ENCODE measurements at regions of chr14 and their contacts with region 1.

Region 1: DNA sequence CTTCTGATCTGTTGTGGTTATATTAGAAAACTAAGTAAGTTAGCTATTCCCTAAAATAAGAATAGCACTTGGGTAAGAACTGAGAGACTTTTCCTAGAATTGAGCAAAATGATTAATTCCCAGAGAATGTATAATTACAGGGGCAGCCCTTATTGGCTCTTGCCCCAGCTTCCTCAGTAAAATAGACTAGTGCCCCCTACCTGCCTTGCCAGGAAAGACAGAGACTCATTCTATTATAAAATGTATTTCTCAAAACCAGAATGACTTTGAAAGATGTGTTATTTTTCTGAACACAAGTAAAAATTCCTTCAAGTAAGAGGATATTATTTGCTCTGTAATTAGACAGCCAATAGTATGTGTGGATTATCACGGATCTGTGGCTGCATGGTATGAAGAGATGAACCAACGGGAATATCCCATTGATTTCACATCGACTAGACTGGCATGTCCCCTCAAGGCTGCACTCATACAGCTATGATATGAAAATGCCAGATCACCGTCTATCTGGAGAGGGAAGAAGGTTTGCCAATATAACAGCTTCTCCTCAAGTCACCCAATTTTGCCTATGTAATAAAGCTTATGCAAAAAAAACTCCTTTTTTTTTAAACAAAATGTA is 7.4 kb upstream of the GLRX5 start:
- DNase-seq: peak; percentile 68
- ATAC-seq: peak; percentile 81
- H3K4me3 ChIP-seq: no peak overlapping the region
- H3K4me3 Mint-ChIP-seq: no peak overlapping the region
- H3K27ac ChIP-seq: no peak overlapping the region
- H3K27ac Mint-ChIP-seq: no peak overlapping the region
- H3K4me1 ChIP-seq: peaks cover 14 to 23% of the 10 kb centered on the region in 2 donors
- H3K4me1 Mint-ChIP-seq: peaks cover 38% of the 10 kb centered on the region
- H3K27me3 ChIP-seq: no peaks in the 10 kb centered on the region
- H3K27me3 Mint-ChIP-seq: no peaks in the 10 kb centered on the region
- CTCF ChIP-seq: peak; percentile 93

Region 2: GRCh38 chr14:95431199-95432143 is 96.0 kb before region 1 on chr14:
- CTCF ChIA-PET with region 1: interaction called, 47 read pairs
- POLR2A ChIA-PET with region 1: no interaction called
- intact Hi-C with region 1: loop called (anchors 1 kb)
- DNase-seq: peak; percentile 48
- ATAC-seq: no peak
- H3K4me3 ChIP-seq: no peak overlapping the region
- H3K4me3 Mint-ChIP-seq: no peak overlapping the region
- H3K27ac ChIP-seq: no peak overlapping the region
- H3K27ac Mint-ChIP-seq: no peak overlapping the region
- H3K4me1 ChIP-seq: peaks cover 0 to 3% of the 10 kb centered on the region in 2 donors
- H3K4me1 Mint-ChIP-seq: peaks cover 7% of the 10 kb centered on the region
- H3K27me3 ChIP-seq: no peaks in the 10 kb centered on the region
- H3K27me3 Mint-ChIP-seq: no peaks in the 10 kb centered on the region
- CTCF ChIP-seq: peak; percentile 53

Region 3: GRCh38 chr14:95452176-95452892 is 75.2 kb before region 1 on chr14:
- CTCF ChIA-PET with region 1: interaction called, 204 read pairs
- POLR2A ChIA-PET with region 1: no interaction called
- intact Hi-C with region 1: no loop called
- DNase-seq: no peak
- ATAC-seq: no peak
- H3K4me3 ChIP-seq: no peak overlapping the region
- H3K4me3 Mint-ChIP-seq: no peak overlapping the region
- H3K27ac ChIP-seq: no peak overlapping the region
- H3K27ac Mint-ChIP-seq: no peak overlapping the region
- H3K4me1 ChIP-seq: peaks cover 11 to 13% of the 10 kb centered on the region in 2 donors
- H3K4me1 Mint-ChIP-seq: peaks cover 8% of the 10 kb centered on the region
- H3K27me3 ChIP-seq: no peaks in the 10 kb centered on the region
- H3K27me3 Mint-ChIP-seq: no peaks in the 10 kb centered on the region
- CTCF ChIP-seq: no peak

Region 4: GRCh38 chr14:95483309-95484165 is 44.0 kb before region 1 on chr14:
- CTCF ChIA-PET with region 1: interaction called, 15 read pairs
- POLR2A ChIA-PET with region 1: no interaction called
- intact Hi-C with region 1: no loop called
- DNase-seq: no peak
- ATAC-seq: no peak
- H3K4me3 ChIP-seq: no peak overlapping the region
- H3K4me3 Mint-ChIP-seq: no peak overlapping the region
- H3K27ac ChIP-seq: no peak overlapping the region
- H3K27ac Mint-ChIP-seq: peak overlapping the region; percentile 59
- H3K4me1 ChIP-seq: peaks cover 64 to 87% of the 10 kb centered on the region in 2 donors
- H3K4me1 Mint-ChIP-seq: peaks cover 80% of the 10 kb centered on the region
- H3K27me3 ChIP-seq: no peaks in the 10 kb centered on the region
- H3K27me3 Mint-ChIP-seq: no peaks in the 10 kb centered on the region
- CTCF ChIP-seq: no peak

Region 5: GRCh38 chr14:95495538-95496025 is 31.9 kb before region 1 on chr14:
- CTCF ChIA-PET with region 1: interaction called, 16 read pairs
- POLR2A ChIA-PET with region 1: no interaction called
- intact Hi-C with region 1: no loop called
- DNase-seq: peak; percentile 91
- ATAC-seq: peak; percentile 92
- H3K4me3 ChIP-seq: peak overlapping the region in 3 of 5 experiments; percentile 14 to 53 (median 21)
- H3K4me3 Mint-ChIP-seq: peak overlapping the region; percentile 70
- H3K27ac ChIP-seq: peak overlapping the region; percentile 97
- H3K27ac Mint-ChIP-seq: peak overlapping the region; percentile 95
- H3K4me1 ChIP-seq: peaks cover 47 to 78% of the 10 kb centered on the region in 2 donors
- H3K4me1 Mint-ChIP-seq: peaks cover 81% of the 10 kb centered on the region
- H3K27me3 ChIP-seq: no peaks in the 10 kb centered on the region
- H3K27me3 Mint-ChIP-seq: no peaks in the 10 kb centered on the region
- CTCF ChIP-seq: no peak

Region 6: DNA sequence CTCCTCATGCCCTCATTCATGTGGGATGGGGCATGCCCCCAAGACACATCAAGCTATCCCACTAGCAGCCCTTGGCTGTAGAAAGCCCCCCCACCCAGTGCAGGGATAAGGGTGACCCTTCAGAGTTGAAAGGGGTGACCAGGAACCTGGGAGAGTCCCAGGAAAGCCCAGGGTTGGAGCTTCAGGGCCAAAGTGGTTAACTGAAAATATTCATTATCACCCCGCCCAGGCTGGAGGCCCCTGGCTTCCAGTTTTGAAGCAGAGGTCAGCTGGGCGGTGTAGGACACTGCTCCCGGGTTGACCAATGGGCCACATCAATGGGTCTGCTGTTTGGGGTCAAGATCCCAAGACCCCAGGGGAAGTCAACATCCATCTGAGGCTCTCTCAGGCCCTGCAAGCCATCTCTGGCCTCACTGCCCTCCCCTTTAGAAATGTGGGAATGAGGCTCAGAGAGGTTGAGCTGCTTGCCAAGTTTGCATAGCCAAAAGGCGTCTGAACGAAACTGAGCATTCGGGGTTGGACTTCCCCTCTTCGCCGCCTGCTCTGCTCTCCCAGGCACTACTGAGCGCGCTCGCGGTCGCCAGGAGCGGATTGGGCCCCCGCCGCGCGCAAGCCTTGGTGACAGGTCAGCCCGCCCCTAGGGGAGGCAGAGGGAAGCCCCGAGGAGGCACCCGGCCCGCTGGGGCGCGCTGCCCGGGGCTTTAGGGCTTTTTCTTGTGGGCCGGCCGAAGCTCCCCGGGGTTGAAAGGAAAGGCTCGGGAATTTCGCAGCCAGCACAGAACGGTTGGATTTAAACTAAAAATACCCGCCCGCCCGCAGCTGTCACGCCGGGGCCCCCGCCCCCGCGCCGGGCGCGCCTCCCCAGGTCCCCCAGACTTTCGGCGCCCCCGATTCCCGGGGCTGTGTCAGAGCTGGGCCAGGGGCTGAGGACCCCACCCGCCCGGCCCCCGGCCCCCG is 11.6 kb before region 1 on chr14:
- CTCF ChIA-PET with region 1: interaction called, 60 read pairs
- POLR2A ChIA-PET with region 1: interaction called, 16 read pairs
- intact Hi-C with region 1: loop called (anchors 1 kb)
- DNase-seq: peak; percentile 95
- ATAC-seq: peak; percentile 85
- H3K4me3 ChIP-seq: peak overlapping the region; percentile 50 to 77 (median 72)
- H3K4me3 Mint-ChIP-seq: peak overlapping the region; percentile 95
- H3K27ac ChIP-seq: peak overlapping the region; percentile 77 to 79
- H3K27ac Mint-ChIP-seq: peak overlapping the region; percentile 95
- H3K4me1 ChIP-seq: peaks cover 66 to 76% of the 10 kb centered on the region in 2 donors
- H3K4me1 Mint-ChIP-seq: peaks cover 77% of the 10 kb centered on the region
- H3K27me3 ChIP-seq: no peaks in the 10 kb centered on the region
- H3K27me3 Mint-ChIP-seq: no peaks in the 10 kb centered on the region
- CTCF ChIP-seq: peak; percentile 65

Region 7: DNA sequence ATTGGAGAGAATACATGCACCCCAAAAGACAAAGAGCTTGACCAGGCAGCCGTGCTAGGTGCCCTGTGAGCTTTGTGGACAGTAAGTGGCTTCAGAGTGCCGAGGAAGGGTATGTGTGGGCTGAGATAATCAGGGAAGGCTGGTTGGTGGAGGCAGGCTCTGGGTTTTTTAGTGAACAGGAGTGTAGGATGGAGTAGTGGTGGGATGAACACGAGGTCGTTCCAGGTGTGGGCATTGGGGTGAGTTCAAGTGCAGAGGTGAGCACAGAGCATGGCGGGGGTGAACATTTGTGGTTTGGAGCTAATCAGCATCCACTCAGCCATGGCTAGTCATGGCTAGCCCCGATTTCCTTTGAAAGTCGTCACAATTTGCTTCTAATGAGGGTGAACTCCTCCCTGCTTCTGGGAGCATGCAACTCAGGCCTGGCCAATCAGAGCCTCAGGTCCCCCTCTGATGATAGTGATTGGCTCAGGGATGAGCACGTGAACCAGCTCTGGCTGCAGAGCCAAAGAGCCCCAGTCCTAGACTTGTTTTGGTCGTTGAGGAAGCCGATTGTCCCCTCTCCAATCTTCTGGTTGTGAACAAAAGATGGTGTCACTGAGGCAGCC is 118.0 kb after region 1 on chr14:
- CTCF ChIA-PET with region 1: no interaction called
- POLR2A ChIA-PET with region 1: no interaction called
- intact Hi-C with region 1: no loop called
- DNase-seq: no peak
- ATAC-seq: no peak
- H3K4me3 ChIP-seq: no peak overlapping the region
- H3K4me3 Mint-ChIP-seq: no peak overlapping the region
- H3K27ac ChIP-seq: no peak overlapping the region
- H3K27ac Mint-ChIP-seq: no peak overlapping the region
- H3K4me1 ChIP-seq: peaks cover 16 to 37% of the 10 kb centered on the region in 2 donors
- H3K4me1 Mint-ChIP-seq: peaks cover 33% of the 10 kb centered on the region
- H3K27me3 ChIP-seq: no peaks in the 10 kb centered on the region
- H3K27me3 Mint-ChIP-seq: peaks cover 19% of the 10 kb centered on the region
- CTCF ChIP-seq: no peak

Measured in B cell (primary cell).